Naive thymus-derived CD4-positive, alpha-beta T cell (primary cell): ENCODE measurements at regions of chr1 and their contacts with region 1.

Region 1: DNA sequence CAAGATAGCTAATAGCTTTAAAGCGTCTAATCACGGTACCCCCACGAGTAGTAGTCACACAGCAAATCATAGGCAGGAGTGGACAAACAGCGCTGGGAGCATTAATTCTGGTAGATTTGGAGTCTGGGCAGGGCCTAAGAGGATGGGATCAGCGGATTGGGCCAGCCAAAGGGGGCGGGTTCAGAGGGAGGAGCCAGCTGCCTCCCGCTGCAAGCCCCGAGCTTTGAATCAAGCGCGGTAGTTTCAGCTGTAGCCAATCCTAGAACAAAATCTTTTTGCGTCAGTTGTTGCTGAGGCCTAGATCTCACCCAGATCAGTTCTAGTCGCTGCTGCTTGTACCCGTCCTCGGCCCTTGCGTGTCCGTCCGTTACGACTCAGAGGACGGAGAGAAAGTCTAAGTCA is 576 bp upstream of the NASP start:
- DNase-seq: peak; percentile 77 to 97 (median 95)
- ATAC-seq: peak; percentile 86
- H3K4me3 ChIP-seq: peak overlapping the region; percentile 98
- H3K4me3 Mint-ChIP-seq: peak overlapping the region; percentile 89 to 100 (median 99)
- H3K27ac ChIP-seq: peak overlapping the region; percentile 91
- H3K27ac Mint-ChIP-seq: peak overlapping the region; percentile 91 to 99 (median 98)
- H3K4me1 ChIP-seq: peaks cover 16 to 18% of the 10 kb centered on the region in 2 donors
- H3K4me1 Mint-ChIP-seq: peaks cover 20 to 37% (median 26%) of the 10 kb centered on the region in 7 donors
- H3K27me3 ChIP-seq: no peaks in the 10 kb centered on the region
- H3K27me3 Mint-ChIP-seq: no peaks in the 10 kb centered on the region

Region 2: DNA sequence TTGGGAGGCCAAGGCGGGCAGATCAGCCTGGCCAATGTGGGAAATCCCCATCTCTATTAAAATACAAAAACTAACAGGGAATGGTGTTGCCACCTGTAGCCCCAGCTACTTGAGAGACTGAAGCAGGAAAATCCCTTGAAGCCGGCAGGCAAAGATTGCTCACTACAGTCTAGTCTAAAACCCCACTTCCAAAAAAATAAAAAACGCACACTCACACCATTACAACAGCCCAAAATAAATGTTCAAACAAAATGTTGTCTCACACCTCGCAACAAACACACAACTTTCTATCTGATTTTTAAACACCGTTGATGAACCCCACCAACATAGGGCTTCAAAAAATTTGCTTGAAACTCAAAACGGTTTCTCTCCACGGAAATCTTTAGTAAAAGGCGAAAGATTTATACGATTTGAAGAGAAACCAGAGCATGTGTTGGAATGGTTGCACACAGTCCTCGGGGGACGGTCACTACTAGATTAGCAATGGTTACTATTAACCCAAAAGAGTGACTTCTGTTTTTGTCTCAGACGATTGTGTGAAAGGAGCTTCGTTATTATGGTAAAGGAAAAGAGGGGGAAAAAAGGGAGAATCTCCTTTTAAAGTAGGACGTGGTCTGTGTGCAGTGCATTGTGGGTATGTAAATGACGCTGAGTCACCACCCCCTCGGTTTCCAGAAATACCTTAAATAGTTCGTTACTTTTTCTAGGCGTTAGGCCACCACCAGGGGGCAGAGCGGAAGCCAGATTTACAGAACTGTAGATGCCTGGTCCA is 852.3 kb before region 1 on chr1 and contains the start of gene RNU5D-1:
- CTCF ChIA-PET with region 1: no interaction called
- POLR2A ChIA-PET with region 1: no interaction called
- intact Hi-C with region 1: loop called in 1 of 2 experiments (anchors 2 kb)
- DNase-seq: peak; percentile 77 to 92 (median 89)
- ATAC-seq: peak; percentile 85
- H3K4me3 ChIP-seq: peak within 1 kb of the TSS; percentile 18
- H3K4me3 Mint-ChIP-seq: peak within 1 kb of the TSS; percentile 54 to 93 (median 84)
- H3K27ac ChIP-seq: peak within 1 kb of the TSS; percentile 86
- H3K27ac Mint-ChIP-seq: peak within 1 kb of the TSS; percentile 97 to 100 (median 98)
- H3K4me1 ChIP-seq: peaks cover 10 to 13% of the 10 kb centered on the region in 2 donors
- H3K4me1 Mint-ChIP-seq: peaks cover 14 to 58% (median 43%) of the 10 kb centered on the region in 7 donors
- H3K27me3 ChIP-seq: no peaks in the 10 kb centered on the region
- H3K27me3 Mint-ChIP-seq: no peaks in the 10 kb centered on the region
- total RNA-seq, gene RNU5D-1: not detected

Region 3: DNA sequence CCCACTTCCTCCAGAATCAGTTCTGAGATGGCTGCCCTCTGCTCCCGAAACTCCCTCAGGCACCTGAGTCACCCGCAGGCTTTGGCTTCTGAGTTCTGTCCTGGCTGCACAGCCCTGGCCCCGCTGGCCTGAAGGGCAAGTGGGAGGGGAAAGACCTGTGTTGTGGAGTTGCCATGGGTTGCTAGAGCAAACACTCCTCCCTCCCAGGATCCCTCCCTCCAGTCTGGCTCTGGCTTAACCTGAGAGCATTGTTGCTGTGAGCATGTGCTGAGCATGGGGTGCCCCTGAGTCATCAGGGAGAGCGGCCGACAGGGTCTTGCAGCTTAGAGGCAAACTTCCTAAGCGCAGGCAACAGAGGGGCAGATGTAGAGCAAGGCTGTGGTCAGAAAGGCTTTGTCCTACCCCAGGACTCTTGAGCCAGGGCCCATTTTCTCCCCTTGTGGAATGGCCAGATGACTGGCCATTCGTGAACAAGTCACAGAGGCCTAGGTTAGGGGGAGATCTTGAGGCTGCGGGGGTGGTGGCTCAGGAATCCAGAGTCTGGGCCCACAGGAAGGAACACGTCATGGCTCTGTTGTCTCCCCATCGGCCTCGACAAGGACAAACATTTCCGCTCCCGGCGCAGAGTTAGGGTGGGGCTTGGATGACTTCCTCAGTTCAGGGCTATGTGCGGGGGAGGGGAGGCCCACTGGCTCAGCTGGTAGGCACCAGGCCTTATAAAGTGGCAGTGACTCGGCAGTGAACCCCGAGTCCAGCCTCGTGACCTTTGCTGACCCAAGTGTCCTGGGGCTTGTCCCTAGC is 775.8 kb before region 1 on chr1 and contains the start of gene DYNLT4:
- CTCF ChIA-PET with region 1: interaction called, 3 read pairs
- POLR2A ChIA-PET with region 1: interaction called, 5 read pairs
- intact Hi-C with region 1: loop called in 1 of 2 experiments (anchors 5 kb)
- DNase-seq: peak; percentile 78 to 96 (median 95)
- ATAC-seq: peak; percentile 68
- H3K4me3 ChIP-seq: peak within 1 kb of the TSS; percentile 48
- H3K4me3 Mint-ChIP-seq: peak within 1 kb of the TSS; percentile 63 to 90 (median 80)
- H3K27ac ChIP-seq: peak within 1 kb of the TSS; percentile 91
- H3K27ac Mint-ChIP-seq: peak within 1 kb of the TSS; percentile 98 to 100 (median 99)
- H3K4me1 ChIP-seq: peaks cover 66 to 67% of the 10 kb centered on the region in 2 donors
- H3K4me1 Mint-ChIP-seq: peaks cover 53 to 84% (median 77%) of the 10 kb centered on the region in 7 donors
- H3K27me3 ChIP-seq: no peaks in the 10 kb centered on the region
- H3K27me3 Mint-ChIP-seq: peaks cover 0 to 3% (median 0%) of the 10 kb centered on the region in 5 donors
- total RNA-seq, gene DYNLT4: 0.31 to 9.7 (median 0.87) TPM

Region 4: GRCh38 chr1:45339789-45340570 is 243.3 kb before region 1 on chr1 and contains the starts of genes MUTYH and TOE1:
- CTCF ChIA-PET with region 1: no interaction called
- POLR2A ChIA-PET with region 1: interaction called, 17 read pairs
- intact Hi-C with region 1: loop called (anchors 1 kb)
- DNase-seq: peak; percentile 84 to 95 (median 89)
- ATAC-seq: peak; percentile 91
- H3K4me3 ChIP-seq: peak within 1 kb of the TSS; percentile 83
- H3K4me3 Mint-ChIP-seq: peak within 1 kb of the TSS; percentile 95 to 100 (median 99)
- H3K27ac ChIP-seq: peak within 1 kb of the TSS; percentile 99
- H3K27ac Mint-ChIP-seq: peak within 1 kb of the TSS; percentile 96 to 99 (median 99)
- H3K4me1 ChIP-seq: peaks cover 31 to 33% of the 10 kb centered on the region in 2 donors
- H3K4me1 Mint-ChIP-seq: peaks cover 24 to 75% (median 61%) of the 10 kb centered on the region in 7 donors
- H3K27me3 ChIP-seq: no peaks in the 10 kb centered on the region
- H3K27me3 Mint-ChIP-seq: no peaks in the 10 kb centered on the region
- total RNA-seq, gene MUTYH: 56.7 to 85.4 (median 67.7) TPM
- total RNA-seq, gene TOE1: 20.6 to 53.3 (median 25.7) TPM

Region 5: DNA sequence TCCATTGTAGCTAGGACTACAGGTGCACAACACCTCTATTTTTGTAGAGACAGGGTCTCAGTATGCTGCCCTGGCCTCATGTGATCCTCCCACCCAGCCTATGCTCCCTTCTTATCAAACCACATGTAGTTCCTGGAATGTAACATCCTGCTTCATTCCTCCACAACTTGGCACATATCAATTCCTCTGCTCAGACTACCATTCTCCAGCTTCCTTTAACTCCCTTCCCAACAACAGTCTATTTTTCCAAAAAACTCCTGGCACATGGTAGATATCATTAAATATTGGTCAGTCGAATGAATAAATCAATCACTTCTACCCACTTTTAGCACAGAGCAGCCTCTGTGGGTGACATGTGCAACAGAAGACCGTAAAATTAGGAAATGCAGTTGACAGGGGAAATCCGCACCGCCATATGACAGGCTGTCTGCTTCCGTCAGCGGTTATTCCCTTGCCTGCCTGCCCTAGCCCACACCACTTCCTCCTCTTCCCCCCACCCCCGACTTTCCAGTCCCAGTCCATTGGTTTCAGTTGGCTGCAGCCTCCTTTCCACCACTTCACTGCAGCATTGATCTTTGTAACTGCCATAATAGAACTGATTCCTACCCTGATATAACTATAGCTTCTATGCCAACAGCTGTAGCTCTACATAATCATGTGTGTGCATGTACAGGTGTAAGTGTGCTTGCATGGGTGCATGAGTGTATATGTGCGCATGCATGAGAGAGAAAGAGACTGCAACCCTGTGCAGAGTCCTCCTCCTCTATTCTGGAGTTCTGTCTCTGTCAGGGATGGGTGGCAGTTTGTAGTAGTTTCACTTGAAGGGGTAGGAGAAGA is 39.5 kb before region 1 on chr1:
- CTCF ChIA-PET with region 1: no interaction called
- POLR2A ChIA-PET with region 1: interaction called, 3 read pairs
- intact Hi-C with region 1: loop called in 1 of 2 experiments (anchors 5 kb)
- DNase-seq: peak; percentile 31 to 87 (median 63)
- ATAC-seq: peak; percentile 98
- H3K4me3 ChIP-seq: peak overlapping the region; percentile 15
- H3K4me3 Mint-ChIP-seq: peak overlapping the region; percentile 33 to 82 (median 76)
- H3K27ac ChIP-seq: peak overlapping the region; percentile 55
- H3K27ac Mint-ChIP-seq: peak overlapping the region; percentile 35 to 93 (median 81)
- H3K4me1 ChIP-seq: peaks cover 12 to 13% of the 10 kb centered on the region in 2 donors
- H3K4me1 Mint-ChIP-seq: peaks cover 13 to 41% (median 32%) of the 10 kb centered on the region in 7 donors
- H3K27me3 ChIP-seq: no peaks in the 10 kb centered on the region
- H3K27me3 Mint-ChIP-seq: no peaks in the 10 kb centered on the region

Region 6: GRCh38 chr1:45843474-45843905 is 260.2 kb after region 1 on chr1:
- CTCF ChIA-PET with region 1: no interaction called
- POLR2A ChIA-PET with region 1: no interaction called
- intact Hi-C with region 1: loop called in 1 of 2 experiments (anchors 5 kb)
- DNase-seq: peak in 1 of 9 donors; percentile 2
- ATAC-seq: no peak
- H3K4me3 ChIP-seq: no peak overlapping the region
- H3K4me3 Mint-ChIP-seq: peak overlapping the region in 1 of 10 donors; percentile 60
- H3K27ac ChIP-seq: no peak overlapping the region
- H3K27ac Mint-ChIP-seq: peak overlapping the region in 1 of 9 donors; percentile 72
- H3K4me1 ChIP-seq: no peaks in the 10 kb centered on the region
- H3K4me1 Mint-ChIP-seq: peaks cover 0 to 14% (median 5%) of the 10 kb centered on the region in 7 donors
- H3K27me3 ChIP-seq: no peaks in the 10 kb centered on the region
- H3K27me3 Mint-ChIP-seq: no peaks in the 10 kb centered on the region